GM12878 (cell line): ENCODE measurements at regions of chr11 and their contacts with region 1.

Region 1: DNA sequence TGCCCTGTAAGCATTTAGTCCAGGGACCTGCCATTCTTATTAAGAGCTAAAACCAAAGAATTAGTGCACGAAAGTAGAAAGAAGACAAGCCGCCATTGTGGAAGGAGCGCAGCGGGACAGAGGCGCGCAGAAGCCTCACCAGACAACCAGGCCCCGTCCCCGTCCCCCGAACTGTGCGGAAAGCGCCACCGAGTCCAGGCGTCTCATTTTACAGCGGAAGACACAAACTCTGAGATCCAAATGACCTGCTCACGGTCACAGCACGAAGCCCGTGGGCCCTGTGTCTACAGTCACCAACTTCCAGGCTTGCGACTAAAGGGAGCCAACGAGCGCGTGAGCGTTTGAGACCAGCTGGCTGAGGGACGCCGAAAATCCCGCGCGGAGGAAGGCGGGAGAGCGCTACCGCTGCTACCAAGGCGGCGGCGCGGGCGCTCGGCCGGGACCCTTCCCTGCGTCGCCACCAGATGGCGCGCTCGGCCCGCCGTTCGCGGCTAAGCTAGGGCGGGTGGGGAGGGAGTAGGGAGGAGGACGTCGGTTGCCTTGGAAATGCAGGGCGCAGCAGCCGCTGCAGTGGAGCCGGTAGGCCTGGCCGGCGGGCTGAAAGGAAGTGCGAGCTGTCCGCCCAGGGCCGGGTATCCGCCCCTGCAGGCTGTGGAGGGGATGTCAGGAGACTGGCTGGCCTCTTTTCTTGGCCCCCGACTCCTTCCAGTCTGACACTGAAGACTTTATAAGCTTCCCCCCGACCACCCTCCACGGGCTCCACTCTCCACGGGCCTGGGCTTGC is 434 bp upstream of the CCDC83 start:
- DNase-seq: peak; percentile 57
- ATAC-seq: peak; percentile 100
- H3K4me3 ChIP-seq: peak overlapping the region; percentile 75
- H3K27ac ChIP-seq: peak overlapping the region; percentile 27; the same call in 1 of the 2 replicates
- H3K4me1 ChIP-seq: peaks cover 8% of the 10 kb centered on the region
- H3K27me3 ChIP-seq: no peaks in the 10 kb centered on the region
- CTCF ChIP-seq: peak; percentile 77 to 95 (median 82)
- EP300 ChIP-seq: no peak
- POLR2A ChIP-seq: peak; percentile 71
- RAD21 ChIP-seq: peak; percentile 83

Region 2: GRCh38 chr11:85779956-85780640 is 74.7 kb before region 1 on chr11:
- CTCF ChIA-PET with region 1: no interaction called
- POLR2A ChIA-PET with region 1: no interaction called
- RAD21 ChIA-PET with region 1: no interaction called
- SMC1A ChIA-PET with region 1: no interaction called
- in situ Hi-C with region 1: no loop called
- intact Hi-C with region 1: no loop called
- DNase-seq: no peak
- ATAC-seq: no peak
- H3K4me3 ChIP-seq: no peak overlapping the region
- H3K27ac ChIP-seq: no peak overlapping the region
- H3K4me1 ChIP-seq: no peaks in the 10 kb centered on the region
- H3K27me3 ChIP-seq: no peaks in the 10 kb centered on the region
- CTCF ChIP-seq: no peak
- EP300 ChIP-seq: no peak
- POLR2A ChIP-seq: no peak
- RAD21 ChIP-seq: no peak

Region 3: GRCh38 chr11:85805387-85805786 is 49.4 kb before region 1 on chr11:
- CTCF ChIA-PET with region 1: no interaction called
- POLR2A ChIA-PET with region 1: no interaction called
- RAD21 ChIA-PET with region 1: no interaction called
- SMC1A ChIA-PET with region 1: no interaction called
- in situ Hi-C with region 1: no loop called
- intact Hi-C with region 1: no loop called
- DNase-seq: no peak
- ATAC-seq: no peak
- H3K4me3 ChIP-seq: no peak overlapping the region
- H3K27ac ChIP-seq: no peak overlapping the region
- H3K4me1 ChIP-seq: no peaks in the 10 kb centered on the region
- H3K27me3 ChIP-seq: peaks cover 8 to 12% of the 10 kb centered on the region in 2 experiments
- CTCF ChIP-seq: no peak
- EP300 ChIP-seq: no peak
- POLR2A ChIP-seq: no peak
- RAD21 ChIP-seq: no peak

Region 4: GRCh38 chr11:85902353-85902752 is 47.6 kb after region 1 on chr11:
- CTCF ChIA-PET with region 1: no interaction called
- POLR2A ChIA-PET with region 1: no interaction called
- RAD21 ChIA-PET with region 1: no interaction called
- SMC1A ChIA-PET with region 1: no interaction called
- in situ Hi-C with region 1: no loop called
- intact Hi-C with region 1: no loop called
- DNase-seq: no peak
- ATAC-seq: no peak
- H3K4me3 ChIP-seq: no peak overlapping the region
- H3K27ac ChIP-seq: no peak overlapping the region
- H3K4me1 ChIP-seq: no peaks in the 10 kb centered on the region
- H3K27me3 ChIP-seq: no peaks in the 10 kb centered on the region
- CTCF ChIP-seq: no peak
- EP300 ChIP-seq: no peak
- POLR2A ChIP-seq: no peak
- RAD21 ChIP-seq: no peak

Region 5: DNA sequence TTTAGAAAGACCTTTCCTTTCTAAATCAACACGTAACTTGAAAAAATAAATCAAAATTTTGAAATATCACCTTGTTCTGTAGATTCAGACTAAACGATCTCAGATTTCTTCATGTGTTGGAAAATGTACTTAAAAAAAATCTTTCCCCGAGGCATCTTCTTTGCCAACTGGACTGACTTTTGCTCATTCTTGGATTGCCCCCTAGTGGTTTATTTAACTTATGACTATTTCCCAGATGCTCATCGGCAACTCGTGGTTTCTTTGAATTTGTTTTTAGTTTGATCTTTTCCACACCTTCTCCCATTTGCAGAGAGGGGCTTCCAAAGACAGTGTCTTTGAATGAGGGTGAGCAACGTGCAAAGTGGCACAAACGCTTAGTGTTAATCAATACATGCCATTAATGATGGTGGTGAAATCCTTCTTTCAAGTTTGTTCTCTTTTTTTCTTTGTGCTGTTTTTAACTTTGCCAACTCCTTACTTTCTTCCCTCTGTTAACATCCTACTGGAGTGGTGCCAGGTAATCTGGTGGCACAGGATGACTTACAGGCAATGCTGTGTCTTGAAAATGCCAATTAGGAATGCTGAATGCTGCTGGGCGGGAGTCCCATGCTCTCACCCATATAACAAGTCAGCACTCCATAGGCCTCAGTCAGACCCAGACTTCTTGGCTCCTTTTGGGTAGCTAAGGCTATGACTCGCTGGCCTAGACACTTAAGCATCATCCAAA is 963.9 kb after region 1 on chr11:
- CTCF ChIA-PET with region 1: no interaction called
- POLR2A ChIA-PET with region 1: no interaction called
- RAD21 ChIA-PET with region 1: interaction called, 4 read pairs
- SMC1A ChIA-PET with region 1: no interaction called
- in situ Hi-C with region 1: loop called (anchors 10 kb)
- intact Hi-C with region 1: loop called (anchors 5 kb)
- DNase-seq: peak; percentile 7
- ATAC-seq: peak; percentile 72
- H3K4me3 ChIP-seq: no peak overlapping the region
- H3K27ac ChIP-seq: no peak overlapping the region
- H3K4me1 ChIP-seq: no peaks in the 10 kb centered on the region
- H3K27me3 ChIP-seq: no peaks in the 10 kb centered on the region; a peak in 2 of 4 replicates
- CTCF ChIP-seq: peak; percentile 50 to 73 (median 65); a peak in 5 of 6 replicates
- EP300 ChIP-seq: no peak
- POLR2A ChIP-seq: no peak
- RAD21 ChIP-seq: peak; percentile 91